ENCODE measurements at regions of chr5 and their contacts with region 1.

Region 1: GRCh38 chr5:178551059-178551458 is 39.1 kb downstream of the COL23A1 start:
- DNase-seq: no peak
- ATAC-seq: peak; percentile 51 to 83 (median 80)
- H3K4me3 ChIP-seq: no peak overlapping the region
- H3K27ac ChIP-seq: no peak overlapping the region
- H3K4me1 ChIP-seq: peaks cover 5% of the 10 kb centered on the region
- H3K27me3 ChIP-seq: no peaks in the 10 kb centered on the region
- CTCF ChIP-seq: peak; percentile 58

Region 2: GRCh38 chr5:178232124-178232919 is 318.7 kb before region 1 on chr5 and contains the start of gene PHYKPL:
- intact Hi-C with region 1: no loop called
- DNase-seq: peak; percentile 86 to 90
- ATAC-seq: peak; percentile 59 to 69 (median 66)
- H3K4me3 ChIP-seq: peak within 1 kb of the TSS; percentile 94
- H3K27ac ChIP-seq: peak within 1 kb of the TSS; percentile 99
- H3K4me1 ChIP-seq: peaks cover 55% of the 10 kb centered on the region
- H3K27me3 ChIP-seq: no peaks in the 10 kb centered on the region
- CTCF ChIP-seq: no peak
- total RNA-seq, gene PHYKPL: 43.2 to 51.6 (median 45.2) TPM

Region 3: GRCh38 chr5:178279725-178280438 is 271.2 kb before region 1 on chr5:
- intact Hi-C with region 1: loop called (anchors 1 to 2 kb)
- DNase-seq: peak; percentile 88 to 94
- ATAC-seq: peak; percentile 93 to 99 (median 95)
- H3K4me3 ChIP-seq: no peak overlapping the region
- H3K27ac ChIP-seq: no peak overlapping the region
- H3K4me1 ChIP-seq: no peaks in the 10 kb centered on the region
- H3K27me3 ChIP-seq: peaks cover 0 to 5% (median 4%) of the 10 kb centered on the region in 3 donors
- CTCF ChIP-seq: peak; percentile 94

Measured in psoas muscle (tissue), 8 donors.